Activated CD4-positive, alpha-beta memory T cell treated with anti-CD3 and anti-CD28 coated beads, Interleukin-2, amount 10 ng/mL, durations not matched to agents 7 days and 5 days (primary cell): ENCODE measurements at regions of chr4 and their contacts with region 1.

Region 1: GRCh38 chr4:101169044-101170014 is 178.0 kb downstream of the PPP3CA start:
- DNase-seq: peak; percentile 65
- H3K4me3 Mint-ChIP-seq: no peak overlapping the region
- H3K27ac Mint-ChIP-seq: no peak overlapping the region
- H3K4me1 Mint-ChIP-seq: no peaks in the 10 kb centered on the region
- H3K27me3 Mint-ChIP-seq: no peaks in the 10 kb centered on the region

Region 2: GRCh38 chr4:101135371-101136010 is 33.8 kb before region 1 on chr4:
- CTCF ChIA-PET with region 1: no interaction called
- POLR2A ChIA-PET with region 1: no interaction called
- DNase-seq: no peak
- H3K4me3 Mint-ChIP-seq: peak overlapping the region; percentile 9
- H3K27ac Mint-ChIP-seq: peak overlapping the region; percentile 12
- H3K4me1 Mint-ChIP-seq: peaks cover 11% of the 10 kb centered on the region
- H3K27me3 Mint-ChIP-seq: no peaks in the 10 kb centered on the region

Region 3: GRCh38 chr4:101730291-101731117 is 561.2 kb after region 1 on chr4:
- CTCF ChIA-PET with region 1: interaction called, 15 read pairs
- POLR2A ChIA-PET with region 1: no interaction called
- DNase-seq: peak; percentile 56
- H3K4me3 Mint-ChIP-seq: no peak overlapping the region
- H3K27ac Mint-ChIP-seq: no peak overlapping the region
- H3K4me1 Mint-ChIP-seq: no peaks in the 10 kb centered on the region
- H3K27me3 Mint-ChIP-seq: peaks cover 10% of the 10 kb centered on the region